Tibial artery (tissue), 4 donors: ENCODE measurements at regions of chr17 and their contacts with region 1.

Region 1: GRCh38 chr17:49798182-49798581 is 9.7 kb downstream of the KAT7 start:
- DNase-seq: no peak
- H3K4me3 ChIP-seq: no peak overlapping the region
- H3K27ac ChIP-seq: no peak overlapping the region
- H3K4me1 ChIP-seq: peaks cover 0 to 26% (median 6%) of the 10 kb centered on the region in 4 donors
- H3K27me3 ChIP-seq: no peaks in the 10 kb centered on the region
- CTCF ChIP-seq: no peak

Region 2: DNA sequence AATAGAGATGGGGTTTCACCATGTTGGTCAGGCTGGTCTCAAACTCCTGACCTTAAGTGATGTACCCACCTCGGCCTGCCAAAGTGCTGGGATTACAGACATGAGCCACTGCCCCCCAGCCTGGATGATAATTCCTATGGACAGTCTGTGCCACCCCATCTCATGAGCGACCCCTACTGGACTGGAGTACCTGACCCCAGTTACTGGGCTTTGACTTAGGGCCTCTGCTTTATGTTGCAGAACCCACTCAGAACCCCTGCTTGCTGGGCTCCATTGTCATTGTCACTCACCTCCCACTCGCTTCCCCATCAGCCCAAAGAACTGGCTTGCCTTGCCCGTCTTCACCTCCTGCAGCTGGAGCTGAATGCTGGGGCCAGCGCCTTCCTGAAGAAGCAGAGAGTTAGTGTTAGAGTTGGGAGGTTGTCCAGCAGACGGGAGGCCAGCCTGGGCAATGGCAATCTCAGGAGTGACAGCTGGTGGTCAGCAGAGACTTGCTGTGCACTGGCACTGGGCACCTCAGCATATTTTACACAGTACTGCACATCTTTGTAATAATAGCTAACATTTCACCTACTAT is 45.7 kb after region 1 on chr17:
- intact Hi-C with region 1: loop called (anchors 10 kb)
- DNase-seq: peak in 1 of 2 donors; percentile 54
- H3K4me3 ChIP-seq: no peak overlapping the region
- H3K27ac ChIP-seq: no peak overlapping the region
- H3K4me1 ChIP-seq: peaks cover 0 to 53% (median 25%) of the 10 kb centered on the region in 4 donors
- H3K27me3 ChIP-seq: no peaks in the 10 kb centered on the region
- CTCF ChIP-seq: no peak